GM13976 (cell line): ENCODE measurements at regions of chr2 and their contacts with region 1.

Region 1: DNA sequence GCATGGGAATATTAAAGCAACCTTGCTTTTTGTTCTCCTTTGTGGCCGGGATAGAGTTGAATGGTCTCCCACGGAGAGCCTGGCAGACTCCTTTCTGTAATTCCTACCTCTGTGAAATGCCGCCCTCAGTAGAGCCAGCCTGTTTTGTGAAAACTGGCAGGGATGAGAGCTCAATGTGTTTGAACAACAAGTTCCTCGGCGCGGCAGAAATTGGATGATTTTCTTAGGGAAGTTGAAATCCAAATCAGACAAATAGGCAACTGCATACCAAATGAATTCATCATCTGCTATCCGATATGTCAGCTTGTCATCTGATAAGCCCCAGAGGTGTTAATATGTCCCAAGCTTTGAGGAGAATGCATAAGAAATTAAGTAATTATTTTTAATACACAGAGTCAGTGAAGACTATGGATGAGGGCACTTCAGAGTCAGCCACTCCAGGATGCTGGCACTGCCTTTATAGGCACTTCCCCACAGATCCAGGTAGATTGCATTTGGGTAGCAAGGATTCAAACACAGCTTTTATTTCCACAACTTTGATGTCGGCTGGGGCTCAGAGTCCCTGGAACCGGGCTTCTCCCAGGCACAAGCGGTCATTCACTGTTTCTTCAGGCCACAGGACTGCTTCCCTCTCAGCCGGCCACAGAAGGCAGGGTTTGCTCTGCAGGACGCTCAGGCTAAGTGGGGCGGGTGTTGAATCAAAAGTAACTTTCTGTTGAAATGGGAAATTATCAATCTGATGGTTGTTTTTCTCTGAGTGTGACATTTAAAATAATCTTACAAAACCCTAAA is 82.8 kb upstream of the REV1 start:
- DNase-seq: no peak
- CTCF ChIP-seq: no peak

Region 2: DNA sequence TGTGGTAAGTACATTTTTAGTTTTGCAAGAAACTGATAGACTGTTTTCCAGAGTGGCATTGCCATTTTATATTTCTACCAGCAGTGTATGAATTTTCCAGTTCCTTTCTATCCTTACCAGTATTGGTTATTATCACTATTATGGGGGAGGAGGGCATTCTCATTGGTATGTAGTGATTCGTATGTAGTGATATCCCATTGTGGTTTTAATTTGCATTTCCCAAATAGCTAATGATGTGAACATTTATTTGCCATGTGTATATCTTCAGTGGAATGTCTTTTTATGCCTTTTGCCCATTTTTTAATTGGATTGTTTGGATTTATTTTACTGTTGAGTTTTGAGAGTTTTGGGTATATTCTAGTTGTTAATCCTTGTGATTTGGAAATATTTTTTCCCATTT is 218.5 kb before region 1 on chr2:
- in situ Hi-C with region 1: no loop called
- DNase-seq: no peak
- CTCF ChIP-seq: no peak

Region 3: GRCh38 chr2:100242891-100243619 is 670.5 kb after region 1 on chr2:
- in situ Hi-C with region 1: loop called (anchors 10 kb)
- DNase-seq: peak; percentile 78
- CTCF ChIP-seq: peak; percentile 83